ENCODE measurements at regions of chr17 and their contacts with region 1.

Region 1: GRCh38 chr17:75109407-75110233 is at the start of gene ARMC7:
- DNase-seq: peak; percentile 86 to 96
- ATAC-seq: peak; percentile 80
- total RNA-seq, gene ARMC7: 20.3 to 29.9 TPM

Region 2: DNA sequence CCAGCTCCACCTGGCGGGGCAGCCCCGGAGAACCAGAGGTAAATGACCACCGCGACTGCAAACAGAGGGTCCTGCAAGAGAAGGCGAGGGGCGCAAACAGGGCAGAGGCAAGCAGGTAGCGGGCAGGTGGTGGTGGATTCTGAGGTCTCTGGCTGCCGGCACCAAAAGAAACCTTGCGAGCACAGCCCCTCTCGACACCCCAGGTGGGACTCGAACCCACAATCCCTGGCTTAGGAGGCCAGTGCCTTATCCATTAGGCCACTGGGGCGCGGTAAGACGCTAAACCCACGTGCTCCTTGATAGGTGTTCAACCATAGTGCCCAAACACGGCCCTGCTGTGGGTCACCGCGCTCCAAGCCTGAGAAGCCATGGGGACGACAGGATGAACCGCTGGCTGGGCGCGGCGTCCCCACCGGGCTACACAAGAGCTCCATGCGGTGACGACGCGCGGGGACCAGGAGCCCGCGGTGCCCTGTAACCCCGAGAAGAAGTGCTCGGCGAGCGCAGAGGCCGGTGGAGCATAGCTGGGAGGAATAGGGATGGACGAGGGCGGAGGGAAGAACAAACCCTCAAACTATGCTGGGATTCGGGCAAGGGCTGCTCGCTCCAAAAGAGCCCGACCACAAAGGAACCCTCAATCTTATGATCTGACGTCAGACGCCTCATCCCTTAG is 75.2 kb before region 1 on chr17:
- intact Hi-C with region 1: no loop called
- DNase-seq: peak; percentile 84 to 85
- ATAC-seq: peak; percentile 62

Region 3: GRCh38 chr17:75173526-75173925 is 63.9 kb after region 1 on chr17:
- intact Hi-C with region 1: loop called in 1 of 2 experiments (anchors 5 kb)
- DNase-seq: no peak
- ATAC-seq: no peak

Region 4: DNA sequence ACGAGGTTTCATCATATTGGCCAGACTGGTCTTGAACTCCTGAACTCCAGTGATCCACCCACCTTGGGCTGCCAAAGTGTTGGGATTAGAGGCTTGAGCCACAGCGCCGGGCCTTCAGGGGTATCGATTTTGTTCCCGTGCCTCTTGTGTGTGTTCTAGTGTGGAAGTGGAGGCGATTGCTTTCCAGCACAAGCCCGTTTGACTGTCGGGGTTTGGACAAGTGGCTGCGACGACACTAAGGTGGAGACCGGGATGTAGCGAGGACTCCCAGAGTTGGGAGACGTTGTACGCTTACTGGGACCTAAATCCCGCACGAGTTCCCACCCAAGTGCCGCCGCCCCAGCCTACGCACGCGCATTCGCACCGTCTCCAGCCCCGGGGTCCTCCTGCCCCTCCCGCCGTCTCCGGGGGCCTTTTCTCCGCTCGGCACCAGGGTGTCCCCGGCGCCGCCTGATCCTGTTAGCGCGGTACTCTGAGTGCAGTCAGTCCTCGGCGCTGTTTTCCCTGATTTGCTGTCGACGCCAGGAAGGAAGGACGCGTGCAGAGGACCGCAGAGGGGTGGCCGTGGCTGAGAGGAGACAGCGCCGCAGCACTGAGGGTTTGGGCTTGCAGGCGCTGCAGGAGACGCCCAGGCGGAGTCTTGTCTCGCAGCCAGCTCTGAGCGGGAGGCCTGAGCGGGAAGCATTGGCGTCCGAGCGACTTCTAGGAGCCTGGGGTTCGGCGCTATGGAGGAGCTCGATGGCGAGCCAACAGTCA is 95.6 kb after region 1 on chr17 and contains the start of gene NUP85:
- intact Hi-C with region 1: loop called in 1 of 2 experiments (anchors 10 kb)
- DNase-seq: peak; percentile 92 to 96
- ATAC-seq: peak; percentile 91
- total RNA-seq, gene NUP85: 43.9 to 56.3 TPM

Region 5: GRCh38 chr17:75295201-75296158 is 185.9 kb after region 1 on chr17:
- intact Hi-C with region 1: no loop called
- DNase-seq: no peak
- ATAC-seq: peak; percentile 40